CD8-positive, alpha-beta T cell (primary cell): ENCODE measurements at regions of chr10 and their contacts with region 1.

Region 1: GRCh38 chr10:16817125-16818019 is at the start of gene RSU1:
- DNase-seq: peak; percentile 100
- ATAC-seq: peak; percentile 96
- H3K4me3 ChIP-seq: peak within 1 kb of the TSS; percentile 71 to 75
- H3K4me3 Mint-ChIP-seq: peak within 1 kb of the TSS; percentile 95
- H3K27ac ChIP-seq: peak within 1 kb of the TSS; percentile 75 to 92
- H3K27ac Mint-ChIP-seq: peak within 1 kb of the TSS; percentile 95
- H3K4me1 ChIP-seq: peaks cover 22% of the 10 kb centered on the region
- H3K4me1 Mint-ChIP-seq: peaks cover 38% of the 10 kb centered on the region
- H3K27me3 ChIP-seq: no peaks in the 10 kb centered on the region
- H3K27me3 Mint-ChIP-seq: no peaks in the 10 kb centered on the region
- CTCF ChIP-seq: no peak
- total RNA-seq, gene RSU1: 23.8 to 26.1 TPM

Region 2: DNA sequence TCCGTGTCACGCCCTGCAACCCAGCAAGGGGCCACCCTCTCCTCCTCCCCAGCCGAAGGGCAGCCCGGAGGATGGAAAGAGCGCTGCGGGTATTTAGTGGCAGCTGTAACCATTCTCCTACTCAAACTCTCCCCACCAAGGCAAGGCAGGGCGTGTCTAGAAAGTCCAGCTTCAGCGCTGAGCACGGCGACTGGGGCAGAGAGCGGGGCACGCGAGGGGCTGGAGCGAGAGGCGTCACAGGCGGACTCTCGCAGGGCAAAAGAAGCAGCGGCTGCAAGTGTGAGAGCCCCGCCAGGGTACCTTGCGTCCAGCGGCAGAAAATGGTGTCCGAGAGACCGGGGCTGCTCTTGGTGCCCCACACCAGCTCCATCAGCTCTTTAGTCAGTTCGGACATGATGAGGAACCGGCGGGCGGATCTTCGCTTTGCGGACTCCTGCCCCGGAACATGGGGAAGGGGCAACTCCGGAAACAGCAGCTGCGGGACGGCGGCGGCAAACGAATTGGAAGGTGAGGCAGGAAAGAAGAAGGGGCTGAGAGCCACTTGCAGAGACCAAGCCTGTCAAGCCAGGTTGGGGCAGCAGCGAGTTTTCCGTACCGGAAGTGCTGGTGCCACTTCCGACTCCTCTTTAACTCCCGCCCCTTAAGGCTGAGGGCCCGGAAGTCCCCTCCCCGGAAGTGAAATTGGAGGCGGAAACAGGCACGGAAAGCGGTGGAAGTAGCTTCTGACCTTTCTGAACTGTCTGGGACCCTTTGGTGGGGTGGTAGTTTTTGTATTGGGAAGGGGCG is 957.3 kb before region 1 on chr10 and contains the start of gene MINDY3:
- CTCF ChIA-PET with region 1: no interaction called
- POLR2A ChIA-PET with region 1: interaction called, 4 read pairs
- intact Hi-C with region 1: loop called (anchors 2 kb)
- DNase-seq: peak; percentile 70 to 93 (median 85)
- ATAC-seq: peak; percentile 89
- H3K4me3 ChIP-seq: peak within 1 kb of the TSS; percentile 91 to 96
- H3K4me3 Mint-ChIP-seq: peak within 1 kb of the TSS; percentile 100
- H3K27ac ChIP-seq: peak within 1 kb of the TSS; percentile 62 to 63
- H3K27ac Mint-ChIP-seq: peak within 1 kb of the TSS; percentile 96
- H3K4me1 ChIP-seq: peaks cover 23% of the 10 kb centered on the region
- H3K4me1 Mint-ChIP-seq: peaks cover 43% of the 10 kb centered on the region
- H3K27me3 ChIP-seq: peaks cover 0 to 2% of the 10 kb centered on the region in 2 experiments
- H3K27me3 Mint-ChIP-seq: peaks cover 13% of the 10 kb centered on the region
- CTCF ChIP-seq: no peak
- total RNA-seq, gene MINDY3: 34.0 to 34.6 TPM

Region 3: GRCh38 chr10:16544129-16544528 is 273.2 kb before region 1 on chr10:
- CTCF ChIA-PET with region 1: no interaction called
- POLR2A ChIA-PET with region 1: no interaction called
- intact Hi-C with region 1: no loop called
- DNase-seq: no peak
- ATAC-seq: no peak
- H3K4me3 ChIP-seq: no peak overlapping the region
- H3K4me3 Mint-ChIP-seq: no peak overlapping the region
- H3K27ac ChIP-seq: no peak overlapping the region
- H3K27ac Mint-ChIP-seq: no peak overlapping the region
- H3K4me1 ChIP-seq: no peaks in the 10 kb centered on the region
- H3K4me1 Mint-ChIP-seq: no peaks in the 10 kb centered on the region
- H3K27me3 ChIP-seq: no peaks in the 10 kb centered on the region
- H3K27me3 Mint-ChIP-seq: peaks cover 29% of the 10 kb centered on the region
- CTCF ChIP-seq: no peak

Region 4: GRCh38 chr10:16612115-16612980 is 205.0 kb before region 1 on chr10:
- CTCF ChIA-PET with region 1: no interaction called
- POLR2A ChIA-PET with region 1: no interaction called
- intact Hi-C with region 1: no loop called
- DNase-seq: peak in 3 of 9 experiments; percentile 7 to 17 (median 12)
- ATAC-seq: no peak
- H3K4me3 ChIP-seq: no peak overlapping the region
- H3K4me3 Mint-ChIP-seq: no peak overlapping the region
- H3K27ac ChIP-seq: no peak overlapping the region
- H3K27ac Mint-ChIP-seq: no peak overlapping the region
- H3K4me1 ChIP-seq: no peaks in the 10 kb centered on the region
- H3K4me1 Mint-ChIP-seq: no peaks in the 10 kb centered on the region
- H3K27me3 ChIP-seq: no peaks in the 10 kb centered on the region
- H3K27me3 Mint-ChIP-seq: no peaks in the 10 kb centered on the region
- CTCF ChIP-seq: no peak

Region 5: DNA sequence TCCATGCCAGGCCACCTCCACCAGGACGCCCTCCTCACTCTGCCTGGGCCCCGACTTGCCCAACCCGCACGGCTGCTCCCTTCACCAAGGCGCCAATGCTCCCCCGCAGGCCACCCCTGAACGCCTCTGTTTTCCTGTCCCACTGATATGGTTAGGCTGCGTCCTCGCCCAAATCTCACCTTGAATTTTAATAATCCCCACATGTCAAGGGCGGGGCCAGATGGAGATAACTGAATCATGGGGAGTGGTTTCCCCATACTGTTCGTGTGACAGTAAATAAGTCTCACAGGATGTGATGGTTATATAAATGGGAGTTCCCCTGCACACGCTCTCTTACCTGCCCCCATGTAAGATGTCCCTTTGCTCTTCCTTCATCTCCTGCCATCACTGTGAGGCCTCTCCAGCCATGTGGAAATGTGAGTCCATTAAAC is 30.0 kb before region 1 on chr10:
- CTCF ChIA-PET with region 1: interaction called, 3 read pairs
- POLR2A ChIA-PET with region 1: interaction called, 7 read pairs
- intact Hi-C with region 1: loop called (anchors 1 to 2 kb)
- DNase-seq: peak; percentile 38 to 93 (median 71)
- ATAC-seq: peak; percentile 97
- H3K4me3 ChIP-seq: peak overlapping the region in 1 of 2 experiments; percentile 6
- H3K4me3 Mint-ChIP-seq: peak overlapping the region; percentile 65
- H3K27ac ChIP-seq: peak overlapping the region; percentile 71 to 94
- H3K27ac Mint-ChIP-seq: peak overlapping the region; percentile 99
- H3K4me1 ChIP-seq: peaks cover 23% of the 10 kb centered on the region
- H3K4me1 Mint-ChIP-seq: peaks cover 32% of the 10 kb centered on the region
- H3K27me3 ChIP-seq: no peaks in the 10 kb centered on the region
- H3K27me3 Mint-ChIP-seq: no peaks in the 10 kb centered on the region
- CTCF ChIP-seq: no peak

Region 6: GRCh38 chr10:16835228-16835627 is 17.9 kb after region 1 on chr10:
- CTCF ChIA-PET with region 1: interaction called, 5 read pairs
- POLR2A ChIA-PET with region 1: interaction called, 9 read pairs
- intact Hi-C with region 1: loop called in 1 of 2 experiments (anchors 1 kb)
- DNase-seq: peak in 6 of 9 experiments; percentile 14 to 71 (median 46)
- ATAC-seq: peak; percentile 99
- H3K4me3 ChIP-seq: peak overlapping the region in 1 of 2 experiments; percentile 27
- H3K4me3 Mint-ChIP-seq: peak overlapping the region; percentile 66
- H3K27ac ChIP-seq: no peak overlapping the region
- H3K27ac Mint-ChIP-seq: peak overlapping the region; percentile 63
- H3K4me1 ChIP-seq: peaks cover 7% of the 10 kb centered on the region
- H3K4me1 Mint-ChIP-seq: peaks cover 11% of the 10 kb centered on the region
- H3K27me3 ChIP-seq: no peaks in the 10 kb centered on the region
- H3K27me3 Mint-ChIP-seq: no peaks in the 10 kb centered on the region
- CTCF ChIP-seq: no peak

Region 7: GRCh38 chr10:17430647-17431355 is 613.4 kb after region 1 on chr10:
- CTCF ChIA-PET with region 1: no interaction called
- POLR2A ChIA-PET with region 1: interaction called, 6 read pairs
- intact Hi-C with region 1: loop called in 1 of 2 experiments (anchors 5 kb)
- DNase-seq: peak in 8 of 9 experiments; percentile 42 to 80 (median 72)
- ATAC-seq: no peak
- H3K4me3 ChIP-seq: no peak overlapping the region
- H3K4me3 Mint-ChIP-seq: no peak overlapping the region
- H3K27ac ChIP-seq: no peak overlapping the region
- H3K27ac Mint-ChIP-seq: no peak overlapping the region
- H3K4me1 ChIP-seq: peaks cover 49% of the 10 kb centered on the region
- H3K4me1 Mint-ChIP-seq: peaks cover 50% of the 10 kb centered on the region
- H3K27me3 ChIP-seq: no peaks in the 10 kb centered on the region
- H3K27me3 Mint-ChIP-seq: peaks cover 2% of the 10 kb centered on the region
- CTCF ChIP-seq: peak; percentile 95

Region 8: GRCh38 chr10:18659120-18659818 is 1841.9 kb after region 1 on chr10 and contains the start of gene ARL5B:
- CTCF ChIA-PET with region 1: no interaction called
- POLR2A ChIA-PET with region 1: no interaction called
- intact Hi-C with region 1: loop called (anchors 2 kb)
- DNase-seq: peak; percentile 94 to 99 (median 96)
- ATAC-seq: peak; percentile 96
- H3K4me3 ChIP-seq: peak within 1 kb of the TSS; percentile 74 to 98
- H3K4me3 Mint-ChIP-seq: peak within 1 kb of the TSS; percentile 100
- H3K27ac ChIP-seq: peak within 1 kb of the TSS; percentile 90 to 92
- H3K27ac Mint-ChIP-seq: peak within 1 kb of the TSS; percentile 99
- H3K4me1 ChIP-seq: peaks cover 28% of the 10 kb centered on the region
- H3K4me1 Mint-ChIP-seq: peaks cover 55% of the 10 kb centered on the region
- H3K27me3 ChIP-seq: no peaks in the 10 kb centered on the region
- H3K27me3 Mint-ChIP-seq: no peaks in the 10 kb centered on the region
- CTCF ChIP-seq: no peak
- total RNA-seq, gene ARL5B: 12.2 to 12.4 TPM